Common myeloid progenitor, CD34-positive (primary cell): ENCODE measurements at regions of chr15 and their contacts with region 1.

Region 1: DNA sequence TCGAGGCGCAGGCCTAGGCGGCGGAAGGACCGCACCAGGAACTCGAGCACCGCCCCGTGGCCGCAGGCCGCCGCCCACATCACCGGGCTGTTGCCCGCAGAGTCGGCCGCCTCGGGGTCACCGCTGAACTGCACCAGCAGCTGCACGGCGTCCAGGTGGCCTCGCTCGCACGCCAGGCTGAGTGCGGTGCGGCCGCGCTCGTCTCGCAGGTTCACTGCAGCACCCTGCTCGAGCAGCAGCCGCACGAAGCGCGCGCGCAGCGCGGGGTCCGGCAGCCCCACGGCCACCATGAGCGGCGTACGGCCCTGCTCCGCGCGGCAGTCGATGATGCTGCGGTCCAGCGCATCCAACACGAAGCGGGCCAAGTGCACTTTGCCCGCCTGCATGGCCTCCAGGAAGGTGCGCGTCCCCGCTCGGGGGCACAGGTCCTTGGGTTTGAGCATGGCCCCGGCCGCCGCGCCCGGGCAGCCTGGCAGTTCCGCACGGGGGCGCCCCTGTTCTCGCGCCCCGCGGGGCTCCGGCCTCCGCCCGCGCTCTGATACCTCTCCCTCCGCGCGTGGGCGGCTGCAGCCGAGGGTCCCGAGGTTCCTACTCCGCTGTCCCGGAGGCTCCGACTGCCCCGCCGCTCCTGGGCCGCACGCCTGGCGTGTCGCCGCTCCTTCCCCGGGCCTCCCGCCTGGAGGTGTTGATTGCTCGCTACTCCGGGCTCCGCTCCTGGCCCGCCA is 558 bp downstream of the ANKRD63 start:
- DNase-seq: peak; percentile 56 to 80 (median 72)
- H3K4me3 ChIP-seq: peak overlapping the region; percentile 20 to 78 (median 67)
- H3K27ac ChIP-seq: no peak overlapping the region
- H3K4me1 ChIP-seq: peaks cover 0 to 54% (median 38%) of the 10 kb centered on the region in 4 experiments
- H3K27me3 ChIP-seq: peaks cover 0 to 41% (median 0%) of the 10 kb centered on the region in 5 experiments

Region 2: GRCh38 chr15:39961051-39961450 is 321.3 kb before region 1 on chr15:
- CTCF ChIA-PET with region 1: no interaction called
- POLR2A ChIA-PET with region 1: no interaction called
- DNase-seq: no peak
- H3K4me3 ChIP-seq: no peak overlapping the region
- H3K27ac ChIP-seq: no peak overlapping the region
- H3K4me1 ChIP-seq: peaks cover 0 to 4% (median 1%) of the 10 kb centered on the region in 4 experiments
- H3K27me3 ChIP-seq: no peaks in the 10 kb centered on the region

Region 3: GRCh38 chr15:40323239-40323952 is 41.1 kb after region 1 on chr15 and contains the start of gene INAFM2:
- CTCF ChIA-PET with region 1: interaction called, 407 read pairs
- POLR2A ChIA-PET with region 1: no interaction called
- DNase-seq: peak; percentile 96 to 98 (median 98)
- H3K4me3 ChIP-seq: peak within 1 kb of the TSS; percentile 41 to 84 (median 81)
- H3K27ac ChIP-seq: peak within 1 kb of the TSS in 1 of 2 experiments; percentile 59
- H3K4me1 ChIP-seq: peaks cover 32 to 64% (median 59%) of the 10 kb centered on the region in 4 experiments
- H3K27me3 ChIP-seq: no peaks in the 10 kb centered on the region